B cell (primary cell): ENCODE measurements at regions of chrX and their contacts with region 1.

Region 1: GRCh38 chrX:65667503-65668376 is at the start of gene MSN:
- DNase-seq: peak; percentile 70
- ATAC-seq: peak; percentile 79
- H3K4me3 ChIP-seq: peak within 1 kb of the TSS; percentile 68 to 78 (median 71)
- H3K4me3 Mint-ChIP-seq: peak within 1 kb of the TSS; percentile 96
- H3K27ac ChIP-seq: peak within 1 kb of the TSS; percentile 53 to 72
- H3K27ac Mint-ChIP-seq: peak within 1 kb of the TSS; percentile 91
- H3K4me1 ChIP-seq: peaks cover 32 to 39% of the 10 kb centered on the region in 2 donors
- H3K4me1 Mint-ChIP-seq: peaks cover 41% of the 10 kb centered on the region
- H3K27me3 ChIP-seq: no peaks in the 10 kb centered on the region
- H3K27me3 Mint-ChIP-seq: no peaks in the 10 kb centered on the region
- CTCF ChIP-seq: no peak
- total RNA-seq, gene MSN: 413 and 414 TPM in 2 replicates

Region 2: GRCh38 chrX:65502618-65503017 is 165.1 kb before region 1 on chrX:
- CTCF ChIA-PET with region 1: no interaction called
- POLR2A ChIA-PET with region 1: no interaction called
- intact Hi-C with region 1: no loop called
- DNase-seq: no peak
- ATAC-seq: no peak
- H3K4me3 ChIP-seq: no peak overlapping the region
- H3K4me3 Mint-ChIP-seq: no peak overlapping the region
- H3K27ac ChIP-seq: no peak overlapping the region
- H3K27ac Mint-ChIP-seq: no peak overlapping the region
- H3K4me1 ChIP-seq: no peaks in the 10 kb centered on the region
- H3K4me1 Mint-ChIP-seq: no peaks in the 10 kb centered on the region
- H3K27me3 ChIP-seq: no peaks in the 10 kb centered on the region
- H3K27me3 Mint-ChIP-seq: no peaks in the 10 kb centered on the region
- CTCF ChIP-seq: no peak

Region 3: DNA sequence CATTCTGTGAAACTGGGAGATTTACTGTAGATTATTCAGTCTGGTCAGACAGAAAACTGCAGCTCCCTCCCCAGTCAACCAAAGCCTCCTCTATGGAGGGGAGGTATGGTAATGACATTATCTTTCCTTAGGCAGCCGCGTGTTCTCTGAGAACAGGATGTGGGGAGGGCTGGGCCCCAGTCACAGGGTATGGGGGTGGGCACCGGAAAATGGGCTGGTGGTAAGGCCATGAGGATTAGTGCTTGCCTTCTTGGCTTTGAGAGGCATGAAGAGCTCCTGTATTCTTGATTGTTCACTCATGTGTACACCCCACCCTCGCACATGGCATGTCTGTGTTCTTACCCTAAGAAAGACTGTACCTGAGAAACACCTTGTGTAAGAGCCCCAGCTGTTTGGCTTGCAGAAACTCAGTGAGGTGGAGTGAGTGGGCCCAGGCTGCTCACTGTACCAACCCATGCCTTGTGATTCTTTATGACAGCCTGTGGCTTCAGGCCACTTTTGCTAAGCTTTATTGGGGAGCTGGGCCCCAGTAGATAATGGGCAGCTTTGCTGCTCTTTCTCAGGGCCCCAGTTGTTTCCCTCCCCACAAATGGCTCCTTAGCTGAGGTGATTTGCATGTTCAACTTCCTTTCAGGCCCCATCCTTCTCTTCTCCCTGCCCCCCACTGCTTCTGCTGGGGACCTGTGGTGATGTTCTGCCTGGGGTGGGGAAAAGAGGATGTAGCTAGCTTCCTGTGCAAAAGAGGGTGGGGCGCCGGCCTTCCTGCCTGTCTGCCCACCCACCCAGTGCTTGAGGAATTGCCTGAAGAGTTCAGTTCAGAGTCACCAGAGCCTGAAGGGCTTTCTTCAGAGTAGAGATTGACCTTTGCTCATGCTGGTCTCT is 30.4 kb after region 1 on chrX:
- CTCF ChIA-PET with region 1: interaction called, 12 read pairs
- POLR2A ChIA-PET with region 1: interaction called, 9 read pairs
- intact Hi-C with region 1: loop called (anchors 1 kb)
- DNase-seq: peak; percentile 83
- ATAC-seq: peak; percentile 63
- H3K4me3 ChIP-seq: peak overlapping the region; percentile 13 to 38 (median 21)
- H3K4me3 Mint-ChIP-seq: peak overlapping the region; percentile 80
- H3K27ac ChIP-seq: peak overlapping the region; percentile 83 to 90
- H3K27ac Mint-ChIP-seq: peak overlapping the region; percentile 92
- H3K4me1 ChIP-seq: peaks cover 86 to 96% of the 10 kb centered on the region in 2 donors
- H3K4me1 Mint-ChIP-seq: peaks cover 83% of the 10 kb centered on the region
- H3K27me3 ChIP-seq: no peaks in the 10 kb centered on the region
- H3K27me3 Mint-ChIP-seq: no peaks in the 10 kb centered on the region
- CTCF ChIP-seq: no peak

Region 4: DNA sequence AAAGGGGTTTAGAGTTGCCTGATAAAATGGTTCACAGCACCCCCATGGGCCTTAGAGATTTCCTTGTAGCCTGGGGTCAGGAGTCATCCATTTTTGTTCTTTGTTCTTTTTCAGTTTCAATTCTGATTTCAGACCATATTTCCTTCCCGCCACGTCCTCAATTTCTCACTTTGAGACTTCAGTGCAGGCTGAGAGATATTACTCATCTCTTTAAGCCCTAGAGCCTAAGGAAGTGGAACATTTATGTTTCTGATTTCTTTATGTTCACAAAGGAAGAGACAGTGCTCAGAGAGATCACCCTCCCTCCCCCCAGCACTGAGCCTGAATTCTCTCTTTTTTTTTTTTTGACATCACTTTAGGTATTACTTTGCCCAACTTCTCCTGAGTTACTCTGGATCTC is 56.0 kb after region 1 on chrX:
- CTCF ChIA-PET with region 1: interaction called, 5 read pairs
- POLR2A ChIA-PET with region 1: no interaction called
- intact Hi-C with region 1: loop called (anchors 5 kb)
- DNase-seq: peak; percentile 33
- ATAC-seq: peak; percentile 50
- H3K4me3 ChIP-seq: no peak overlapping the region
- H3K4me3 Mint-ChIP-seq: peak overlapping the region; percentile 53
- H3K27ac ChIP-seq: peak overlapping the region in 1 of 2 donors; percentile 72
- H3K27ac Mint-ChIP-seq: peak overlapping the region; percentile 86
- H3K4me1 ChIP-seq: peaks cover 51 to 69% of the 10 kb centered on the region in 2 donors
- H3K4me1 Mint-ChIP-seq: peaks cover 82% of the 10 kb centered on the region
- H3K27me3 ChIP-seq: no peaks in the 10 kb centered on the region
- H3K27me3 Mint-ChIP-seq: no peaks in the 10 kb centered on the region
- CTCF ChIP-seq: no peak